HEK293 (cell line): ENCODE measurements at regions of chr19 and their contacts with region 1.

Region 1: GRCh38 chr19:37334179-37335071 is 36.5 kb upstream of the ZNF527 start:
- H3K4me3 ChIP-seq: peak overlapping the region; percentile 57
- H3K27ac ChIP-seq: peak overlapping the region; percentile 83
- H3K4me1 ChIP-seq: peaks cover 15% of the 10 kb centered on the region
- CTCF ChIP-seq: no peak

Region 2: GRCh38 chr19:37012093-37012745 is 322.2 kb before region 1 on chr19:
- CTCF ChIA-PET with region 1: no interaction called
- POLR2A ChIA-PET with region 1: no interaction called
- H3K4me3 ChIP-seq: no peak overlapping the region
- H3K27ac ChIP-seq: no peak overlapping the region
- H3K4me1 ChIP-seq: no peaks in the 10 kb centered on the region
- CTCF ChIP-seq: no peak

Region 3: DNA sequence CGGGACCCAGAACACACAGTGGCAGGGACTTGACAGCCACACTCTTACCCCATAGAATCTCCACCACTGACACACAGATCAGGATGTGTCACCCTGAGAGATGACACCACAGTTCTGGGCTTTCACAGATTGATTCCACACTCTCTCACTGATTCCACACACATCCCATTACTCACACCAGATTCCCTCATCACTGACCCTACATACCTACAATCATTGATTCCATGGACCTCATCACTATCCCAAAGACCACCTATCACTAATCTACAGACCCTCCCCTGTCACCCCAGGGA is 21.1 kb before region 1 on chr19:
- CTCF ChIA-PET with region 1: no interaction called
- POLR2A ChIA-PET with region 1: interaction called, 38 read pairs
- H3K4me3 ChIP-seq: no peak overlapping the region
- H3K27ac ChIP-seq: no peak overlapping the region
- H3K4me1 ChIP-seq: no peaks in the 10 kb centered on the region
- CTCF ChIP-seq: no peak

Region 4: GRCh38 chr19:37403403-37403802 is 69.0 kb after region 1 on chr19:
- CTCF ChIA-PET with region 1: no interaction called
- POLR2A ChIA-PET with region 1: no interaction called
- H3K4me3 ChIP-seq: no peak overlapping the region
- H3K27ac ChIP-seq: no peak overlapping the region
- H3K4me1 ChIP-seq: no peaks in the 10 kb centered on the region
- CTCF ChIP-seq: no peak

Region 5: GRCh38 chr19:37506387-37507166 is 172.2 kb after region 1 on chr19 and contains the start of gene ZNF793:
- CTCF ChIA-PET with region 1: no interaction called
- POLR2A ChIA-PET with region 1: interaction called, 12 read pairs
- H3K4me3 ChIP-seq: peak within 1 kb of the TSS; percentile 53
- H3K27ac ChIP-seq: peak within 1 kb of the TSS; percentile 68
- H3K4me1 ChIP-seq: no peaks in the 10 kb centered on the region
- CTCF ChIP-seq: peak; percentile 41; the same call in 1 of the 2 replicates